Posterior cingulate gyrus (tissue), 11 donors: ENCODE measurements at regions of chr9 and their contacts with region 1.

Region 1: GRCh38 chr9:119365291-119366027 is 3.8 kb downstream of the BRINP1 start:
- DNase-seq: peak; percentile 39 to 91 (median 61)

Region 2: GRCh38 chr9:117644133-117644931 is 1721.1 kb before region 1 on chr9:
- intact Hi-C with region 1: loop called (anchors 10 kb)
- DNase-seq: peak; percentile 63 to 96 (median 83)

Region 3: DNA sequence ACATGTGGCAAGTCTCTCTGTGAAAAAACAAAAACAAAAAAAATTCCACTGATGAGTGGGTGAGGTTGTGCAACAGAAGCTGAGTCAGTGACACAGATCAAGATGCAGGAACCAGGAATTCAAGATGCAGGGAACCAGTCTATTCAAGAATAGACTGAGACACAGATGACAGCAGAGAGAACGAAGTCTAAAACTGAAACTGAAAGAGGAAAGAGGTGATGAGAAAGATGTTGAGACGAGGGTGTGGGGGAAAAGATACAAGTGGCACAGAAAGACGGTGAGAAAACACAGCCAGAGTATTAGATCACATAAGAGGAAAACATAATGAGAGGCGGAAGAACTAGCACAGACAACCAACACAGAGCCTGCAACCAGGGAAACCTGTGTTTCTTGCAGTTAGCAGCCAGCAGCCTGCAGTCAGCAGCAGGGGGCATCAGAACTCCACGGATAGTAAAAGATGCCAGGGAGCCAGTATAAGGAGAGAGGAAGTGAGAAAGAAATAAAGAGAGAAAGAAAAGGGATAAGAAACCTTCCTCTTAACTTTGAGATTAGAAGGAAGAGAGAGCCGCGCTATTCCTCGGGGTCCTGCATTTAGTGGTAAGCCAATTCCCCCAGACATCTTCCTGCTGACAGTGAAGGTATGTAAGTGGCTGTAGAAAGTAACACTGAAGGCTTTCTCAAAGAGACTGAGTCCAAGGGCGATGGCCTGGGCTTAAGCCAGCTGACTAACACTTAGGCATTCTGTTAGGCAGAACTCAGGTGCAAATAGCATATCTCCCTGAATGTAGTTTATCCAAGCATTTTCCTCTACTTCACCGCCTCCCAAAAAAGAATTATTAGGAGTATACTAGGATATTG is 1582.3 kb before region 1 on chr9:
- intact Hi-C with region 1: loop called (anchors 1 kb)
- DNase-seq: peak; percentile 67 to 97 (median 86)

Region 4: DNA sequence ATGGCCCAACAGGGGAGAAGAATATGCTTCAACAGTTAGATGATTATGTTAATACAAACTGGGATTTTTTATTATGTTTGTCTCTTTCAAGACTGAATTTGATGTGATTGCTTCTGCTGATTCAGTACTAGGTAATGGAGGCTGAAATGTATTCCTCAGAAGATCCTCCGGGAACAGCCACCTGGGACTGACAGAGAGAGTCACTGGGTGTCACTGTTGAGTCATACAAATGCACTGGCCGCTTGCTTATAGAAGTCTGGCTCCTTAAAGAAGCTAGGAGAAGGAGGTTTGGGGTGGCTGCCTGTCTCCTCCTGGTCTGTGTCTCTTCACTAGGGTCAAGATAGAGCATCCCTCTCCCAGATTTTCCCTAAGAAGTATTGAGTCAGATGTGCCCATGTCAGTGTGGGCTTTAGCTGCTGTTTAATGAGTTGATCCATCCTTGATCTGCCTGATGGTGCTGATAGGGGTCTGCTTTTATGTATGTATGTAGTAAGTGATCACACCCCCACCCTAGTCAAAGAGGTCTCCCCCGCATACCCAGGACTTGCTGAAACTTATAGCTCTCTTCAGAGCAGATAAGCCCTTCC is 769.6 kb before region 1 on chr9:
- intact Hi-C with region 1: loop called (anchors 1 kb)
- DNase-seq: peak; percentile 13 to 91 (median 44)

Region 5: DNA sequence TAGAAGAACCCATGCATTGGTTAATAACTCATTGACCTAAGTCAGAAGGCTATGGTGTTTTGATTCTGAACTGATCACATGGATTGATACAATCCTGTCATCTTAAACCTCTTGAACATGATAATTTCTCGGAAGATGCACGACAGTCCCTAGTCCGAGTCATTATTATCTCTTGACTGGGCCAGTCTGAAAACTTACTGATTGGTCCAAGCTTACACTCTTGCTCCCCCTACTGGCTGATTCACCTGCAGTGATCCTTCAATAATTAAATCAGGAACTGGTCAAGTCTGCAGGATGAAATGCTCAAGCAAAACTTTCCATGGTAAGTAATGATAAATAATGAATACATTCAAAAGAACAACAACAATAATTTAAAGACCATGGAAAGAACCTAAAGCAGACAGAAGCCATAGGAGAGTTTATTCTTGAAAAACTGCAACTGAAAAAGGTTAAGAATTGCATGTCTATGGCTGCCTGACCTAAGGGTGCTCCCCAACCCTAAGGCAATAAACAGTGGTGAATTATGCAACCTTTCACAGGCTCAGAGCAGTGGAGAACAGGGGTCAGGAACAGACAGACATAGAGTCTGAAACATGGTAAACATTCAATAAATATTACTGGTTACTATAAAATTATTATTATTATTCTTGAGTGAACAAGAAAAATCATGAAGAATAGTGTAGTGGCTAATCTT is 75.6 kb before region 1 on chr9:
- intact Hi-C with region 1: loop called (anchors 5 kb)
- DNase-seq: peak in 1 of 10 donors; percentile 29

Region 6: DNA sequence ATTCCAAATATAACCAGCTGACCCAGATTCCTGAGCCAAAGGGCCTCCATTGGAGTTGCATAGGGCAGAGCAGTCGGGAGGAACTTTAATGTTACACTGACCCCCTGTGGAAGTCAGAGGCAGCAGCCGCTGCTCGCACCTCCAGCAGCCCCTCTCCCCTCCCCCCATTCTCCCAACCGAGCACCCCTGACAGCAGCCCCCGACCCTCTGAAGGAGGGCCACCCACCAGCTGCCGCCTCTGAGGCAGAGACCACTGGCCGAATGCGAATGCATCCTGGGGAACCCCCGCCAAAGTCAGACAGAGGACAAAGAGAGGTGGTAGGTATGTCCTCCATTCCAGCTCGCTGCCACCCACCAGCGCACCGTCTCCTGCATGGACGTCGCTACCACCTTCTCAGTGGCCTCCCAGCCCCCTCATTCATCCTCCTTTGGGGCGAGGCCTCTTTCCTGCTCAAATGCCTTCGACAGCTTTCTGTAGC is 983.5 kb after region 1 on chr9:
- intact Hi-C with region 1: loop called (anchors 5 kb)
- DNase-seq: peak in 7 of 10 donors; percentile 20 to 91 (median 37)

Region 7: GRCh38 chr9:120477521-120478001 is 1112.1 kb after region 1 on chr9:
- intact Hi-C with region 1: loop called (anchors 5 kb)
- DNase-seq: peak; percentile 42 to 95 (median 68)